Naive thymus-derived CD4-positive, alpha-beta T cell (primary cell): ENCODE measurements at regions of chr11 and their contacts with region 1.

Region 1: GRCh38 chr11:62753736-62754603 is at the start of gene ZBTB3:
- DNase-seq: peak; percentile 89 to 99 (median 98)
- ATAC-seq: peak; percentile 96
- H3K4me3 ChIP-seq: peak within 1 kb of the TSS; percentile 94
- H3K4me3 Mint-ChIP-seq: peak within 1 kb of the TSS; percentile 86 to 100 (median 98)
- H3K27ac ChIP-seq: peak within 1 kb of the TSS; percentile 83
- H3K27ac Mint-ChIP-seq: peak within 1 kb of the TSS; percentile 93 to 99 (median 95)
- H3K4me1 ChIP-seq: peaks cover 15 to 16% of the 10 kb centered on the region in 2 donors
- H3K4me1 Mint-ChIP-seq: peaks cover 9 to 41% (median 29%) of the 10 kb centered on the region in 7 donors
- H3K27me3 ChIP-seq: no peaks in the 10 kb centered on the region
- H3K27me3 Mint-ChIP-seq: no peaks in the 10 kb centered on the region
- total RNA-seq, gene ZBTB3: 6.4 to 24.1 (median 19.0) TPM

Region 2: DNA sequence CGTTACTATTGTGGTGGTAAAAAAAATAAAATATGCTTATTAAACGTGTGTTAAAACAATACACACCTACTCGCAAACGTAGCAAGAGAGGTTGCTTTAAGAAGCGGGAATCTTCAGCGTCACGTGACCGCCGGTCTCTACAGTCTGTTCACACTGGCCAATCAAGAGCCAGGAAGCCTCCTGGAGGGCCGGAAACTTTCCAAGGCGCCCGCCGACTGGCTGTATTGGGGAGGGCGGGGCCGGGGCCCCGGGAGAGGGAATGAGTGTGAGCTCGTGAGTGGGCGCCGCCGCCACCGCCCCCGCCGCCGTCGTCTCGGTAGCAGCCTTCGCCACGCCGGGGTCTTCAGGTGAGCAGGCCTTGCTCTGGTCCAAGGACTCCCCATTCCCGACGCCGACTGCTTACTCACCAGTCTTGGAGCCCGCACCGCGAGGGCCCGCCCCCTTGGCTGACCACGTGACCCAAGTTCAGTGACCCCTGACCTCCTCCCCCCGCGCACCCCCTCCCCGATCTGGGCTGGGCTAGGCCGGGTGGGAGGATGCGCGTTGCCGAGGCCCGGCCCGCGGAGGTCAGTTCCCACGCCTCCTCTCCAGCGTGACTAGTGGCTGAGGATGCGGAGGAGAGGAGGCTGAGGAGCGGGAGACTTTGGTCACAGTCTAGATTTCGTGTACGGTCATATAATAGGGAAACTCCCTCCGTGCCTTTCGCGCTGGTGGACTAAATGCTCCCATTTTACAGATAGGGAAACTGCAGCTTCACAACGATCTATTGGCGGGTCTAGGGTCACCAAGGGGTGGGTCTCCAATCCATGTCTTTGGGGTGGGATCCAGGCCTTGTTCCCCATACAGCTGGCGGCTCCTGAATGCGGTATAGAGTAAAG is 17.4 kb after region 1 on chr11 and contains the start of gene TAF6L:
- CTCF ChIA-PET with region 1: interaction called, 6 read pairs
- POLR2A ChIA-PET with region 1: interaction called, 74 read pairs
- intact Hi-C with region 1: loop called (anchors 1 kb)
- DNase-seq: peak; percentile 80 to 98 (median 82)
- ATAC-seq: peak; percentile 92
- H3K4me3 ChIP-seq: peak within 1 kb of the TSS; percentile 66
- H3K4me3 Mint-ChIP-seq: peak within 1 kb of the TSS; percentile 88 to 98 (median 94)
- H3K27ac ChIP-seq: peak within 1 kb of the TSS; percentile 82
- H3K27ac Mint-ChIP-seq: peak within 1 kb of the TSS; percentile 89 to 97 (median 94)
- H3K4me1 ChIP-seq: peaks cover 10 to 13% of the 10 kb centered on the region in 2 donors
- H3K4me1 Mint-ChIP-seq: peaks cover 17 to 37% (median 27%) of the 10 kb centered on the region in 7 donors
- H3K27me3 ChIP-seq: no peaks in the 10 kb centered on the region
- H3K27me3 Mint-ChIP-seq: no peaks in the 10 kb centered on the region
- total RNA-seq, gene TAF6L: 13.1 to 34.9 (median 24.1) TPM

Region 3: DNA sequence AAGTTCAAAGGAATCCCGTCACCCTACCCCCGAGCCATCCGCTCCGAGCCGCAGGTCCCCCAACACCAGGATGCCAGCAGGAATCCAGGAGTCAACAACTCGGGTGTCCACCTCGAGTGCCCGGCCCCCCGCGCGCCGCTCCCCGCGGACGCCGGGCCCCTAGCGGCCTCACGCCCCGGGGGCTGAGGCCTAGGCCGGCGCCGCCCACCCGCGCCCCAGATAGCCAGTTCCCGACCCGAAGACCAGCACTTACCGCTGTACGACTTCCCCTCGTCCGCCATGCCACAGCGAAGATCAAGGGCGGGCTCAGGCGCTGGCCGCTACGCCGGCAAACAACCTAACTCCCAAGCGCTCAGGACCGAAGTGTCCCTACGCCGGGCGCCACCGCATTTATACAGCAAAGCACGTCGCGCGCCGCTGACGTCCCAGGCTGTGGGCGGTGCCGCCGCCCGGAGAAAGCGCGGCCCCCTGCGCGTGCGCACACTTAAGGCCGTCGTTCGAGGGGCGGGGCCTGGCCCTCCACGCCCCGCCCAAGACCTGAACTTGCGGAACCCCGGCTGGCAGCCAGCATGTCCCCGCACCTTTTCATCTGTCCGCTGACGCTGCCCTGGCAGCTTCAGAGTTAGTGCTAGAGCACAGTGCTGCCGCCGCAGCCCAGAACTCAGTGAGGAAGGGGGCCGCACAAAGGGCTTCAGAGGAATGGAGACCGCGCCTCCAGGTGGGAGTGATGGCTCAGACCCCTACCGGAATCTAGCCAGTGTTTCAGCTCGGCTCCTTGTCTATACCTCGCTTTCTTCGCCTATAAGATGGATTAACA is 51.3 kb after region 1 on chr11 and contains the start of gene NXF1:
- CTCF ChIA-PET with region 1: no interaction called
- POLR2A ChIA-PET with region 1: interaction called, 5 read pairs
- intact Hi-C with region 1: loop called in 1 of 2 experiments (anchors 1 kb)
- DNase-seq: peak; percentile 91 to 99 (median 97)
- ATAC-seq: peak; percentile 92
- H3K4me3 ChIP-seq: peak within 1 kb of the TSS; percentile 87
- H3K4me3 Mint-ChIP-seq: peak within 1 kb of the TSS; percentile 90 to 100 (median 99)
- H3K27ac ChIP-seq: peak within 1 kb of the TSS; percentile 97
- H3K27ac Mint-ChIP-seq: peak within 1 kb of the TSS; percentile 95 to 100 (median 99)
- H3K4me1 ChIP-seq: peaks cover 13 to 18% of the 10 kb centered on the region in 2 donors
- H3K4me1 Mint-ChIP-seq: peaks cover 17 to 55% (median 34%) of the 10 kb centered on the region in 7 donors
- H3K27me3 ChIP-seq: no peaks in the 10 kb centered on the region
- H3K27me3 Mint-ChIP-seq: peaks cover 0 to 2% (median 0%) of the 10 kb centered on the region in 5 donors
- total RNA-seq, gene NXF1: 92.1 to 421 (median 195) TPM